Activated B cell treated with CpG ODN at 0.5 μM for 24 hours (primary cell): ENCODE measurements at regions of chr1 and their contacts with region 1.

Region 1: DNA sequence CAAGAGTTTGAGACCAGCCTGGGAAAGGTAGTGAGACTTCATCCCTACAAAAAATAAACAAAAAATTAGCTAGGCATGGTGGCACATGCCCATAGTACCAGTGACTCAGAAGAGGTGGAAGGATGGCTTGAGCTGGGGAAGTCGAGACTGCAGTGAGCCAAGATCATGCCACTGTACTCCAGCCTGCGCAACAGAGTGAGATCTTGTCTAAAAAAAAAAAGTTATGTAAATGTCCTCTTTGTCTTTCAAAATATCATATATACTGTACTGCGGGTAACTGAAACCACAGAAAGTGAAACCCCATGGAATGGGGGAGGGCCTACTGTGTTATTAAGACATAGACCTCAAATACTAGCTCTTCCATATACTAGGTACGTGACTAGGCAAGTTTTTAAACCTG is 20.8 kb downstream of the ACADM start:
- DNase-seq: no peak
- ATAC-seq: peak; percentile 75
- H3K4me3 Mint-ChIP-seq: no peak overlapping the region
- H3K27ac Mint-ChIP-seq: no peak overlapping the region
- H3K4me1 Mint-ChIP-seq: peaks cover 11% of the 10 kb centered on the region
- H3K27me3 Mint-ChIP-seq: no peaks in the 10 kb centered on the region
- CTCF ChIP-seq: no peak

Region 2: DNA sequence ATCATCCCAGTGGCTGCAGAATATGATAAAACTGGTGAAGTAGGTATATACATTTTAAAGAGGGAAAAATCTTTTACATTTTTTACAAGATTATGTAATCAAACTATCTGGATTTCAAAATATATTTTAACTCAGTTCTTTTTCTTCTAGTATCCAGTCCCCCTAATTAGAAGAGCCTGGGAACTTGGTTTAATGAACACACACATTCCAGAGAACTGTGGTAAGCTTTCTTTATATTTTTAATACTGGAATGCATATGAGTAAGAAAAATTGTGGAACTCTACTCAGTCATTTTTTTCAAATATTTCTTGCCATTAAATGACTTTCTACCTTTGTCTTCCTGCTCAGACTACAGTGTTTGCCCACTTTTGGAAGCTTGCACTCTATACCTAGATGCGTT is 12.6 kb before region 1 on chr1:
- CTCF ChIA-PET with region 1: no interaction called
- POLR2A ChIA-PET with region 1: interaction called, 10 read pairs
- intact Hi-C with region 1: no loop called
- DNase-seq: no peak
- ATAC-seq: no peak
- H3K4me3 Mint-ChIP-seq: no peak overlapping the region
- H3K27ac Mint-ChIP-seq: no peak overlapping the region
- H3K4me1 Mint-ChIP-seq: peaks cover 12% of the 10 kb centered on the region
- H3K27me3 Mint-ChIP-seq: no peaks in the 10 kb centered on the region
- CTCF ChIP-seq: no peak

Region 3: DNA sequence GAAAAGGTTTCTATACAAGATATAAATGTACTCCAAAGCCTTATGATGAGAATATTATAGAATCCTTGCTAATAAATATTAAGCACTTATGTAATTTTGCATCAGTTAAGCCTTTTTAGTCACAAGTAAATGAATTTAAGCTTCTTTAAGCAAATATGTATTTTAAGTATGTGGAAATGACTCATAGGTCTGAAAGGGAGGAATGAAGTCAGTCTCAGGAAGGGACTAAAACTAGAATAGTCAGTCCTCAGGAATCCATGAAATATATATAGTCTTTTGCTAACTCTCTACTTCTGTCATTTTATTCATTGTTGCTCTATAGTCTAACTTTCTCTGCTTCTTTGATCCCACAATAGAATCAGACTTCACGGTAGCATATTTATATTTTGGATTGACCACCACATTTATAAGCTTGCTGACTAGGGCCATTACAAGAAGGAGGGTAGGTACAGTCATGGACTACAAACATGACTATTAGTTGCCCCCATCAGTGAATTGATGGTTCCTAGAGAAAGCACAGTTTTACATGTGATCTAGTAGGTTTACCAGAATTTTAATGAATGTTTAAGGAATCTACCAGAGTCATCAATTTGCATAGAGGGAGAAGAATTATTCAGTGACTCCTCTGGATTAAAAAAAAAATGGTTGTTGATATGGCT is 20.6 kb after region 1 on chr1:
- CTCF ChIA-PET with region 1: no interaction called
- POLR2A ChIA-PET with region 1: no interaction called
- intact Hi-C with region 1: loop called (anchors 2 kb)
- DNase-seq: no peak
- ATAC-seq: no peak
- H3K4me3 Mint-ChIP-seq: no peak overlapping the region
- H3K27ac Mint-ChIP-seq: no peak overlapping the region
- H3K4me1 Mint-ChIP-seq: no peaks in the 10 kb centered on the region
- H3K27me3 Mint-ChIP-seq: no peaks in the 10 kb centered on the region
- CTCF ChIP-seq: no peak